Activated CD8-positive, alpha-beta T cell treated with anti-CD3 and anti-CD28 coated beads for 36 hours (primary cell): ENCODE measurements at regions of chr17 and their contacts with region 1.

Region 1: DNA sequence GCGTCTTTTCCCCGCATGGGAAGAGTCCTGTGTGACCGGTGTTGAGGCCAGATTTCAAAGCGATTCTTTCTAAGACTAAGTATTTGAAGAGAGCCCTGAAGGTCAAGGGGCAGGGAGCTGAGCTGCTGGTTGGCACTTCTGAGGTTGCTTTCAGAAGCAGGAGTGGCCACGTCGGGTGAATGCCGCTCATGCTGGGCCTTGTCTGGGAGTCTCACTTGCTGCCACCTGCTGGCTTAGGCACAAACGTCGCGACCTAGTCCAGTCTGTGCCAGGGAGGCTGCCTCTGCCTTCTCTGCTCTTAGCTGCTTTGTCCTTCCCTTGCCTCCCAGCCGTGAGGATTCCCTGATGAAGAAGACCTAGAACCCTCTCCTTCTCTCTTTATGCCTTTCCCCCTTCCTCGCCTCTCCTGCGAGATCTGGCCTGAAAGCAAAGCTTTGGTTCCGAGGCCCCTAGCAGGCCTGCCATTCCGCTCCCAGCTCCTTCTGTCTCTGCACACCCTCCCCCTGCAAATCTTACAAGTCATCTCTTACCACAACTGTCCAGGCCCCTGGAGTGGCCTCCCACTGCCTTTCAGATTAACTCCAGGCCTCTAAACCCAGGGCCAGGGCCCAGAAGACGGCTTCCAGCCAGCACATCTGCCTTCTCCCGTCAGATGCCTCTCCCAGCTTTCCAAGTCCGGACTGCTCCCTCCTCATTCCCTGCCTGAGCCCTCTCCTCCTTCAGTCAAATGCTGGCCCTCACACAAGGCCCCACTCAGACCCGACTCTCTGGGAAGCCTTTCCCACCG is 11.4 kb downstream of the CTNS start:
- DNase-seq: peak; percentile 74
- ATAC-seq: peak; percentile 83
- H3K4me3 Mint-ChIP-seq: no peak overlapping the region
- H3K27ac Mint-ChIP-seq: no peak overlapping the region
- H3K4me1 Mint-ChIP-seq: peaks cover 12% of the 10 kb centered on the region
- H3K27me3 Mint-ChIP-seq: no peaks in the 10 kb centered on the region
- CTCF ChIP-seq: peak; percentile 44

Region 2: GRCh38 chr17:3602499-3602898 is 45.5 kb before region 1 on chr17:
- CTCF ChIA-PET with region 1: interaction called, 21 read pairs
- POLR2A ChIA-PET with region 1: no interaction called
- intact Hi-C with region 1: no loop called
- DNase-seq: peak; percentile 40
- ATAC-seq: no peak
- H3K4me3 Mint-ChIP-seq: no peak overlapping the region
- H3K27ac Mint-ChIP-seq: no peak overlapping the region
- H3K4me1 Mint-ChIP-seq: no peaks in the 10 kb centered on the region
- H3K27me3 Mint-ChIP-seq: no peaks in the 10 kb centered on the region
- CTCF ChIP-seq: peak; percentile 64

Region 3: GRCh38 chr17:3636154-3636907 is 11.6 kb before region 1 on chr17 and contains the starts of genes CTNS and SHPK:
- CTCF ChIA-PET with region 1: interaction called, 14 read pairs
- POLR2A ChIA-PET with region 1: no interaction called
- intact Hi-C with region 1: no loop called
- DNase-seq: peak; percentile 96
- ATAC-seq: peak; percentile 98
- H3K4me3 Mint-ChIP-seq: peak within 1 kb of the TSS; percentile 89
- H3K27ac Mint-ChIP-seq: peak within 1 kb of the TSS; percentile 96
- H3K4me1 Mint-ChIP-seq: peaks cover 31% of the 10 kb centered on the region
- H3K27me3 Mint-ChIP-seq: no peaks in the 10 kb centered on the region
- CTCF ChIP-seq: no peak
- total RNA-seq, gene CTNS: 6.4 to 9.3 TPM
- total RNA-seq, gene SHPK: 10.0 TPM

Region 4: GRCh38 chr17:3667366-3668278 is 19.7 kb after region 1 on chr17:
- CTCF ChIA-PET with region 1: interaction called, 5 read pairs
- POLR2A ChIA-PET with region 1: interaction called, 10 read pairs
- intact Hi-C with region 1: no loop called
- DNase-seq: peak; percentile 9
- ATAC-seq: no peak
- H3K4me3 Mint-ChIP-seq: peak overlapping the region; percentile 98
- H3K27ac Mint-ChIP-seq: no peak overlapping the region
- H3K4me1 Mint-ChIP-seq: peaks cover 16% of the 10 kb centered on the region
- H3K27me3 Mint-ChIP-seq: no peaks in the 10 kb centered on the region
- CTCF ChIP-seq: no peak